ENCODE measurements at regions of chr19 and their contacts with region 1.

Region 1: GRCh38 chr19:48835734-48836088 is 580 bp downstream of the HSD17B14 start:
- DNase-seq: peak; percentile 96

Region 2: GRCh38 chr19:48646001-48646721 is 189.6 kb before region 1 on chr19 and contains the start of gene CA11:
- intact Hi-C with region 1: loop called (anchors 10 kb)
- DNase-seq: peak; percentile 95
- total RNA-seq, gene CA11: 4.8 to 5.7 TPM

Region 3: GRCh38 chr19:48656840-48657474 is 178.8 kb before region 1 on chr19:
- intact Hi-C with region 1: loop called in 1 of 2 experiments (anchors 10 kb)
- DNase-seq: no peak

Region 4: GRCh38 chr19:48674921-48675824 is 160.5 kb before region 1 on chr19:
- intact Hi-C with region 1: loop called in 1 of 2 experiments (anchors 10 kb)
- DNase-seq: peak; percentile 92

Region 5: GRCh38 chr19:48780631-48781391 is 54.9 kb before region 1 on chr19:
- intact Hi-C with region 1: loop called in 1 of 2 experiments (anchors 2 kb)
- DNase-seq: no peak

Region 6: DNA sequence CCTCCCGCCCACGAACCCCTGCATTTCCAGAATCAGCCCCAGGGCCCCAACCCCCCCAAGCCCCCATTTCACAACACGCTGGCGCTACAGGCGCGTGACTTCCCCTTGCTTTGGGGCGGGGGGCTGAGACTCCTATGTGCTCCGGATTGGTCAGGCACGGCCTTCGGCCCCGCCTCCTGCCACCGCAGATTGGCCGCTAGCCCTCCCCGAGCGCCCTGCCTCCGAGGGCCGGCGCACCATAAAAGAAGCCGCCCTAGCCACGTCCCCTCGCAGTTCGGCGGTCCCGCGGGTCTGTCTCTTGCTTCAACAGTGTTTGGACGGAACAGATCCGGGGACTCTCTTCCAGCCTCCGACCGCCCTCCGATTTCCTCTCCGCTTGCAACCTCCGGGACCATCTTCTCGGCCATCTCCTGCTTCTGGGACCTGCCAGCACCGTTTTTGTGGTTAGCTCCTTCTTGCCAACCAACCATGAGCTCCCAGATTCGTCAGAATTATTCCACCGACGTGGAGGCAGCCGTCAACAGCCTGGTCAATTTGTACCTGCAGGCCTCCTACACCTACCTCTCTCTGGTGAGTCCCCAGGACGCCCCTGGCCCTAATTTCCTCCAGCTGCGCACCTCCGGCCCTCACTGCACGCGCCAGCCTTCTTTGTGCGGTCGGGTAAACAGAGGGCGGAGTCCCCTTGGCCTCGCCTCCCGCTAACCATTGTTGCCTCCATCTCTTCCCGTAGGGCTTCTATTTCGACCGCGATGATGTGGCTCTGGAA is 129.5 kb after region 1 on chr19 and contains the start of gene FTL:
- intact Hi-C with region 1: no loop called
- DNase-seq: peak; percentile 99
- total RNA-seq, gene FTL: 2,854 to 3,275 TPM